ENCODE measurements at regions of chr17 and their contacts with region 1.

Region 1: DNA sequence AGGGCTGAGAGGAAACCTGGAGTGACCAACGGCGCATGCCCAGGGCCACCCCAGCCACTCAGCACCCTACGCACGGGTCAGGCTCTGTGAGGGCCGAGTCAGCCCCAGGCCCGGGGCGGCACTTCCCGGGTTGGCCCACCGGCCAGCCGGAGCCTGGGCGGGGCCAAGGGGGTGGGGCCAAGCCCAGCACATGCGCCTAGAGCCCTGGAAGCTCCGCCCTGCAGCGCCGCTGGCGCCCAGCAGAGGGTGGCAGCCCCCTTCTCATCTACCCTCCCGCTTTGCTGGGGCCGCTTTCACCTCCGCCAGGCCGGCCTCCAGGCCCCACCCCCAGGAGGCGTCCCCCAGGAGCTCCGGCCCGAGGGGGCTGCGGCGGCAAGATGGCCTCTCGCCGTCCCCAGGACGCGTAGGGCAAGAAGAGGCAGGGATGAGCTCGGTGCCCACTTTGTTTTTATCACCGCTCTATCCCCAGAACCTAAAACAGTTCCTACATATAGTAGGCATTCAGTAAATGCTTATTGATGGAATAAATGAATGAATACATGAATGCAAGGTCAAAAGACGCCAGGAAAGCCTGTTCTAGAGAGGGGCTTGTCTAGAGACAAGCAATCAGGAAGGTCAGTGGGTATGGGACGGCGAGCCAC is 31.3 kb downstream of the MYO18A start:
- DNase-seq: peak; percentile 82 to 95 (median 88)
- ATAC-seq: peak; percentile 92
- H3K4me3 ChIP-seq: peak overlapping the region; percentile 44
- H3K4me3 Mint-ChIP-seq: peak overlapping the region; percentile 78
- H3K27ac ChIP-seq: peak overlapping the region; percentile 60 to 83
- H3K27ac Mint-ChIP-seq: peak overlapping the region; percentile 67
- H3K4me1 ChIP-seq: peaks cover 31% of the 10 kb centered on the region
- H3K4me1 Mint-ChIP-seq: peaks cover 43% of the 10 kb centered on the region
- H3K27me3 ChIP-seq: no peaks in the 10 kb centered on the region
- H3K27me3 Mint-ChIP-seq: no peaks in the 10 kb centered on the region
- CTCF ChIP-seq: peak; percentile 98

Region 2: DNA sequence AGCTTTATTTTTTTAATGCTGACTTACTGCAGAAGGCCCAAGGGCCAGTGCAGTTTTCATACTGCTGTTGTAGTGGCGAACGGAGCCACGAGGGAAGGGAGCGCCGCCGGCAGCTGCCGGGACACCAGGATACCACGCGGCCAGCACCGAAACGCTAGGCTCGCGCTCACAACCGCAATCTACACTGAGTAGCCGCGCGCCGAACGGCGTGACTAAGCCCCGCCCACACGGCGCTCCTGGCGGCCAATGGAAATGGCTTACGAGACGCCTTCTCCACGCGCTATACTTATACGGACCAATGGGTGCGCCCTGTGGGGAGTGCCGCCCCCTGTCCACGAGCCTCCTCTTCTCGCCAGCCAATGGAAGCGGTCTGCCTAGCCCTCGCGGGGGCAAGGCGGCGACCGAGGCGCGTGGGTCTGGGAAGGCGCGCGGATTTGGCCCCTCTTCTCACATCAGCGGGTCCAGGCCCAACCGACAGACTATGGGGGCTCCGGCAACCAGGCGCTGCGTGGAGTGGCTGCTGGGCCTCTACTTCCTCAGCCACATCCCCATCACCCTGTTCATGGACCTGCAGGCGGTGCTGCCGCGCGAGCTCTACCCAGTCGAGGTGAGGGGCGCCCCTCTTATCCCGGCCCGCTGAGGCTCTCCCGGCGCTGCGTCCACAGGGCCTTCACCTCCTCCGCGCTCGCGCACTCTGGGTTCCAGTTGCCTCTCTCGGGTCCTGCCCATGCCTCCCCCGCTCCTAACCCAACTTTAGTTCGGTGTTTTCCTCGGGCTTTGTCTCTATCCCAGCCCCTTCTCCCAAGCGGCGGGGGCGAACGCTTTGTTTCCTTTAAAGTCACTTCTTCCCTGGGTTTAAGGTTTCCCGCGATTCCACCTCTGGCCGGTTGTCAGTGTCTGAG is 829.9 kb before region 1 on chr17 and contains the start of gene TMEM97:
- CTCF ChIA-PET with region 1: no interaction called
- POLR2A ChIA-PET with region 1: no interaction called
- intact Hi-C with region 1: no loop called
- DNase-seq: peak; percentile 84 to 97 (median 92)
- ATAC-seq: peak; percentile 98
- H3K4me3 ChIP-seq: peak within 1 kb of the TSS; percentile 73
- H3K4me3 Mint-ChIP-seq: peak within 1 kb of the TSS; percentile 96
- H3K27ac ChIP-seq: no peak within 1 kb of the TSS
- H3K27ac Mint-ChIP-seq: peak within 1 kb of the TSS; percentile 79
- H3K4me1 ChIP-seq: peaks cover 20% of the 10 kb centered on the region
- H3K4me1 Mint-ChIP-seq: peaks cover 24% of the 10 kb centered on the region
- H3K27me3 ChIP-seq: no peaks in the 10 kb centered on the region
- H3K27me3 Mint-ChIP-seq: no peaks in the 10 kb centered on the region
- CTCF ChIP-seq: no peak
- total RNA-seq, gene TMEM97: 2.6 to 3.7 TPM

Region 3: DNA sequence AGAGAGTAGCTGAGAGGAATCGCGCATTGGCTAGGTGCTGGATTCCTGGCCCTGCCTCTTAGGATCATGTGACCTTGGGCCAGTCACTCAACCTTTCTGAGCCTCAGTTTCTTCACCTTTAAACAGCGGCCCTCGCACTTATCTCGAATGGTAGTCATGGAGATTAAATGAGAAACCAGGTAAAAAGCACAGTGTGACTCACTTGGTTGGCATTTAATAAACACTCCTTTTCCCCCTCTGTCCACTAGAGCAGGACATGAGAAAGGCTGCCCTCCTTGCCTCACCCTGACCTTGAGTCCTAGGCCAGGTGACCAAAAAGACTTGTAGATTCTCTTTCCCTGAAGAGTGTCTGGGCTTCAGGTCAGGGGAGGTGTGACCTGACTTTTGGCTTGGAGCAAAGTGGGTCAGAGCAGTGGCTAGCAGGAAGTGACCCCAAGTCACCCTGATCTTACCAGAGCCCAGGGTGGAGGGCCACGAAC is 40.9 kb before region 1 on chr17:
- CTCF ChIA-PET with region 1: no interaction called
- POLR2A ChIA-PET with region 1: no interaction called
- intact Hi-C with region 1: no loop called
- DNase-seq: no peak
- ATAC-seq: no peak
- H3K4me3 ChIP-seq: no peak overlapping the region
- H3K4me3 Mint-ChIP-seq: no peak overlapping the region
- H3K27ac ChIP-seq: no peak overlapping the region
- H3K27ac Mint-ChIP-seq: no peak overlapping the region
- H3K4me1 ChIP-seq: no peaks in the 10 kb centered on the region
- H3K4me1 Mint-ChIP-seq: peaks cover 4% of the 10 kb centered on the region
- H3K27me3 ChIP-seq: no peaks in the 10 kb centered on the region
- H3K27me3 Mint-ChIP-seq: no peaks in the 10 kb centered on the region
- CTCF ChIP-seq: no peak

Region 4: GRCh38 chr17:29124117-29124924 is 24.6 kb before region 1 on chr17:
- CTCF ChIA-PET with region 1: interaction called, 94 read pairs
- POLR2A ChIA-PET with region 1: interaction called, 5 read pairs
- intact Hi-C with region 1: loop called (anchors 1 to 2 kb)
- DNase-seq: peak in 9 of 14 experiments; percentile 14 to 74 (median 34)
- ATAC-seq: peak; percentile 97
- H3K4me3 ChIP-seq: no peak overlapping the region
- H3K4me3 Mint-ChIP-seq: no peak overlapping the region
- H3K27ac ChIP-seq: no peak overlapping the region
- H3K27ac Mint-ChIP-seq: no peak overlapping the region
- H3K4me1 ChIP-seq: peaks cover 18% of the 10 kb centered on the region
- H3K4me1 Mint-ChIP-seq: peaks cover 4% of the 10 kb centered on the region
- H3K27me3 ChIP-seq: no peaks in the 10 kb centered on the region
- H3K27me3 Mint-ChIP-seq: no peaks in the 10 kb centered on the region
- CTCF ChIP-seq: peak; percentile 68

Region 5: DNA sequence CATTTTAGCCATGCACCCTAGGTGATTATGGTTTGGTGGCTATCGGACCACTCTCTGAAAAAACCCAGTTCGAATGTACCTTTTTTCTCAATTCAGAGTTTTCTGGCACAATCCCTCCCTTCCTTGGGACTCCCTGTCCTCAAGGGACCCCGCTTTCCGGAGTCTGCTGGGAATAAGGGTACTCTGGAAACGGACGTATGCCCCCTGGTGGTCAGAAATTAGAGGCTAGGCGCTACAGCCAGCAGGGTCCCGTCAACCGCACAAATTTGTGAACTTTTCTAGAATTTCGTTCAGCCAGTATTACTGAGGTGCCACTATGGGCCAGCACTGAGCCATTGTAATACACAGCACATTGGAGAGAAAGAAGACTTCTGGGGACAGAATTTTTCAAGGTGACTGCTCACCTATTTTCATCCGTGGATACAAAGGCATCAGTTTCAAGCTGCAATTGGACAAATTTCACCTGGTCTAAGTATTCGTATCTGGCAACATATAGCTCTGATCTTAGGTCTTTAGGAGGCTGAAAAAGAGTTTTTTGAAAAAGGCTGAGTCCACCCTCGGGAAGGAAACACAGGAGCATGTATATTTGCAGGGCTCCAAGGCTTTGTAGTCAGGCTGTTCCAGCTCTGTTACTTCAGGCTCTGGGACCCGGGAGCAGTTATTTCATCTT is 70.6 kb after region 1 on chr17:
- CTCF ChIA-PET with region 1: interaction called, 35 read pairs
- POLR2A ChIA-PET with region 1: interaction called, 5 read pairs
- intact Hi-C with region 1: loop called (anchors 1 kb)
- DNase-seq: peak; percentile 52 to 85 (median 60)
- ATAC-seq: peak; percentile 90
- H3K4me3 ChIP-seq: no peak overlapping the region
- H3K4me3 Mint-ChIP-seq: no peak overlapping the region
- H3K27ac ChIP-seq: no peak overlapping the region
- H3K27ac Mint-ChIP-seq: no peak overlapping the region
- H3K4me1 ChIP-seq: peaks cover 8% of the 10 kb centered on the region
- H3K4me1 Mint-ChIP-seq: peaks cover 9% of the 10 kb centered on the region
- H3K27me3 ChIP-seq: no peaks in the 10 kb centered on the region
- H3K27me3 Mint-ChIP-seq: no peaks in the 10 kb centered on the region
- CTCF ChIP-seq: peak; percentile 90

Region 6: DNA sequence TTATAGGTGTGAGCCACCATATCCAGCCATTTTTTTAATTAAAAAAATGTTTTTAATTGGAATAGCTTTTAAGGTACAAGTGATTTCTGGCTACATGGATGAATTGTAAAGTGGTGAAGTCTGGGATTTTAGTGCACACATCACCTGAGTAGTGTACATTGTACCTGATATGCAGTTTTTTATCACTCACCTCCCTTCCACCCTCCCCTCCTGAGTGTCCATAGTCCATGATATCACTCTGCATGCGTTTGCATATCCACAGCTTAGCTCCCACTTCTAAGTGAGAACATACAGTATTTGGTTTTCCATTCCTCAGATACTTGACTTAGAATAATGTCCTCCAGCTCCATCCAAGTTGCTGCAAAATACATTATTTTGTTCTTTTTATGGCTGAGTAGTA is 84.4 kb after region 1 on chr17:
- CTCF ChIA-PET with region 1: no interaction called
- POLR2A ChIA-PET with region 1: no interaction called
- intact Hi-C with region 1: no loop called
- DNase-seq: no peak
- ATAC-seq: no peak
- H3K4me3 ChIP-seq: no peak overlapping the region
- H3K4me3 Mint-ChIP-seq: no peak overlapping the region
- H3K27ac ChIP-seq: no peak overlapping the region
- H3K27ac Mint-ChIP-seq: no peak overlapping the region
- H3K4me1 ChIP-seq: no peaks in the 10 kb centered on the region
- H3K4me1 Mint-ChIP-seq: no peaks in the 10 kb centered on the region
- H3K27me3 ChIP-seq: no peaks in the 10 kb centered on the region
- H3K27me3 Mint-ChIP-seq: no peaks in the 10 kb centered on the region
- CTCF ChIP-seq: no peak

Region 7: DNA sequence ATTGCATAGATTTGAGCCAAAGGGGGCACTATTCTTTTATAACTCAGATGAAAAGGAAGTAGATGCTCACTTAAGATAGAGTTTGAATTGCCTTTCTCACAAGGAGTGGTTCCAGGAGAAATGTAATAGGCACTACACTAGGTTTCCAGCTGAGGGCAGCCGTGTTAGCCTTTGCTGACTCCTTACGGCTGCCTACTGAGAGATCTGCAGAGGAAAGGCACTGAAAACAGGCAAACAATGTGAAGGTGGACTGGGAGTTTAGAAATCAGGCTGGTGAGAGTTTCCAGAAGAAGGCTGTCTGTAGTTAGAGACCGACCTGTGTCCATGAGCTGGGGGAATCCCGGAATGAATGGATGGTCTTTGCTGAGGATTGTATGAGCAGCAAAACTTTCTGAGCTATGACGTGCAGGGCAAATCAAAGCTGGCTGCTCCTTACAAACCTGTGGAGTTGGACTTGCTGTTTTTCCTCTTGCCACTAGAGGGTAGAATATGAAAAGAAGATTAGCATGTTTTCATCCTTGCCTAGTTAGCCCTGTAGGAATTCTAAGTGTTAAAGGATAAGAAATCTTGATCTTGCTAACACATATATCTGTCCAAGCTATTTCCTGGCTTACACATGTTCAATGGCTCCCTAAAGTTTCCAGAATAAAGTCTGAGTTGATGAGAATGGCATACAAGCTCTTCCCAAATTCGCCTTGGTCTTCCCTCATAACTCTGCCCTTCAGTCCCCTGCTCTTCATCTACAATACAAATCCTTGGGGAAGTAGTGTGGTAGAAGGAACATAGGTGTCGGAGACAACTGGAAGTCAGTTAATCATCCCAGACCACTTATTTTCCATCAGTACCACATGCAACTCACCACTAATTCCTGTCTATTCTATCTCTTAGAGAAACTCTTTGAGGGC is 221.2 kb after region 1 on chr17:
- CTCF ChIA-PET with region 1: interaction called, 11 read pairs
- POLR2A ChIA-PET with region 1: interaction called, 3 read pairs
- intact Hi-C with region 1: no loop called
- DNase-seq: peak; percentile 18 to 81 (median 48)
- ATAC-seq: peak; percentile 96
- H3K4me3 ChIP-seq: no peak overlapping the region
- H3K4me3 Mint-ChIP-seq: no peak overlapping the region
- H3K27ac ChIP-seq: peak overlapping the region in 1 of 2 donors; percentile 18
- H3K27ac Mint-ChIP-seq: no peak overlapping the region
- H3K4me1 ChIP-seq: peaks cover 3% of the 10 kb centered on the region
- H3K4me1 Mint-ChIP-seq: no peaks in the 10 kb centered on the region
- H3K27me3 ChIP-seq: no peaks in the 10 kb centered on the region
- H3K27me3 Mint-ChIP-seq: no peaks in the 10 kb centered on the region
- CTCF ChIP-seq: peak; percentile 80